ENCODE measurements at regions of chr6 and their contacts with region 1.

Region 1: GRCh38 chr6:83884523-83884922 is 25.0 kb downstream of the CYB5R4 start:
- DNase-seq: no peak
- H3K4me3 ChIP-seq: no peak overlapping the region
- H3K27ac ChIP-seq: no peak overlapping the region
- H3K4me1 ChIP-seq: peaks cover 5% of the 10 kb centered on the region
- H3K27me3 ChIP-seq: no peaks in the 10 kb centered on the region
- CTCF ChIP-seq: peak in 2 of 3 experiments; percentile 55 to 70
- POLR2A ChIP-seq: no peak

Region 2: GRCh38 chr6:84220809-84221409 is 336.4 kb after region 1 on chr6:
- intact Hi-C with region 1: loop called (anchors 5 kb)
- DNase-seq: no peak
- H3K4me3 ChIP-seq: no peak overlapping the region
- H3K27ac ChIP-seq: no peak overlapping the region
- H3K4me1 ChIP-seq: no peaks in the 10 kb centered on the region
- H3K27me3 ChIP-seq: no peaks in the 10 kb centered on the region
- CTCF ChIP-seq: peak in 1 of 3 experiments; percentile 39
- POLR2A ChIP-seq: no peak

Region 3: DNA sequence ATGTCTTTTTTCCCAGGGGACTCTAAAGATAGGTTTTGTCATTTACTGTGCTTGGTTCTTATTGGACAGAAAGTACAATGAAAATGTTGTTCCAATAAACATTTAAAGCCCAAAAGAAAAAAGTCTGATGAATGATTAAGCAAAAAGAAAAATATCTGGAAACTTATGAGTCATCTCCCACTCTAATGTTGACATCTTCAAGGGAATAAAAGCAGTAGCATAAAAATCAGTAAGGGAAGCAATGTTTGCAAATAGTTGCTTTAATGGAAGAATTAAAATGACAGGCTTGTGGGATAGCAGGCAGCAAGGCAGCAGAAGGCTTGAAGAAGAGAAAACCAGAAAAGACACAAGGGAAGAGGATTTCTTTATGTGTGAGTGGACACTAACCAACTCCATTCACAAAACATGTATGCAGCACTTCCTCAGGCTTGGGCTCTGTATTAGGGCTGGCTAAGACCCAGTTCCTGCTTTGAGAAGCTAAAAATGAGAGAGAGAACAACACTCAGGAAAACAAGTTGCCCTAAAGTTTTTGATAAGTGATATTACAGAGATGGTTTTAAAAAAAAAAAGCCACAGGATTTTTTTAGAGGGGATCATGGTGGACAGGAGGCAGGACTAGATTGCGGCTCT is 1302.1 kb after region 1 on chr6:
- intact Hi-C with region 1: no loop called
- DNase-seq: no peak
- H3K4me3 ChIP-seq: no peak overlapping the region
- H3K27ac ChIP-seq: no peak overlapping the region
- H3K4me1 ChIP-seq: no peaks in the 10 kb centered on the region
- H3K27me3 ChIP-seq: no peaks in the 10 kb centered on the region
- CTCF ChIP-seq: no peak
- POLR2A ChIP-seq: no peak